Cardiac septum (tissue), 1 donor: ENCODE measurements at regions of chr7 and their contacts with region 1.

Region 1: GRCh38 chr7:25478925-25479324 is 250.6 kb upstream of the NPVF start:
- DNase-seq: no peak

Region 2: DNA sequence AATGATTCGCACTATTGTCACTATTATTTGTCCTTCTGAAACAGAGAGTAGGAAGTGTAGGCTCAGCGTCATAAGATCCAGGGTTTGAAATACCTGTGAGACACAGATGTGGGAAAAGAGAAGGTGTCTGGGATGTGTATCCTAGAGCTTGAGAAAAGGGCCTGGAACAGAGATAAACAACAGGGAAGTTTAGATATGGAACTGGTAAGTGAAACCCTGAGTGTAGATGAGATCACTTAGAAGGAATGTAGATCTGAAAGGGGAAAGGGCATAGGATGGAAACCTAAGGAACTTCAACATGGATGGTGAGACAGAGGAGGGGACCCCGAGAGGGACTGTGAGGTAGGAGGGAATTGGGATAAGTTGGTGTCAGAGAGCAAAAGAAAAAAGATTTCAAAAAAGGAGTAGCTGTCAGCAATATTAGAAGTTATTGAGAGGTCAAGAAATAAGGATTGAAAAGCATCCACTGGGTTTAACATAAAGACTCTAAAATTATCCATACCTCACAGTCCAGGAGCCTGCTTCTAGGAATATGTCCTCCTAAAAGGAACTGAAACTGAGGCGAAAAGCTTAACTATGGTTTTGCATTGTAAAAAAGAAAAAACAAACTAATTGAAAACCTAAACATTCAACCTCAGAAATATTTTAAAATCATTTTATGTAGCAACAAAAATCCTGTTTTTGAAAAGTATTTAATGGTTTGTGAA is 131.4 kb before region 1 on chr7:
- intact Hi-C with region 1: no loop called
- DNase-seq: no peak

Region 3: DNA sequence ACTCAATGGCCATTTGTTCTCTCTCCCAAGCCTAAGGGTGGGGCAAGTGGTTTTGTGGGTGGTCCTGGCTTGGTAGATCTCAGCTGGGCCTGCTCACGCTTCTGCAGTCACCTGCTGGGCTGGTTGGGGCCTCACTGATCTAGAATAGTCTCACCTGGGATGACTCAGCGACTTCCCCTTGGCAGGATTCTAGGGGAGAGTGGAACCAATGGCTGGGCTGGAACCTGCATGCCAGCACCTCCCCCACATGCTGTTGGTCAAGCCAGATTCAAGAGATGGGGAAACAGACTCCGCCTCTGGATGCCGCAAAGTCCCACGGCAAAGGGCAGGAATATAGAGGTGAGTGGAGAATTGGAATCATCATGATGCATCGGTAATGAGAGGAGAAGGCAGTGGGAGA is 42.3 kb after region 1 on chr7:
- intact Hi-C with region 1: no loop called
- DNase-seq: no peak

Region 4: DNA sequence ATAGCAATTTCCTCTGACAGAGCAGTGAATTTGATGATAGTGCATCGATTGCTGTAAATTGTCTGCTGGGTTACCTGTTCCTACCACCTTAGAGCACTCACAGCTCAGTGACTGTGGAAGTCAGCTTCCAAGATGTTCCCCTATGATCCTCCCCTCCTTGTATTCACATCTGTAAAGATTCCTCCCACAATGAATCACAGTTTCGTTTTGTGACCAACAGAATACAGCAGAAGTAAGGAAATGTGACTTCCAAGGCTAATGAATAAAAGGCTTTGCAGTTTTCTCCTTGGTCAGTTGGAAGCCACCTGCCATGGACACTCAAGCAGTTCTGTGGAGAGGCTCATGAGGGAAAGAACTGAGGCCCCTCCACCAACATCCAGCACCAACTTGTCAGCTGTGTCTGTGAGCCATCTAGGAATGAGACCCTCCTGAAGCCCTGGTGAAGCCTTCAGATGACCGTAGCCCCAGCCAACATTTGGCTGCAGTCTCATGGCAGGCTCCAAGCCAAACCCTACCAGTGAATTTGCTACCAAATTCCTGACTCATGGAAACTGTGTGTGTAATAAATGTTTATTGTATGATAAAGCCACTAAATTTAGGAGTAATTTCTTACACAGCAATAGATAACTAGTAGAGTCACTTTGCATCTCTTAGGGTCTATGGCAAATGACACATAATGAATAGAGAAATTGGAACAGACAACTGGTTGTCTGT is 58.9 kb after region 1 on chr7:
- intact Hi-C with region 1: loop called (anchors 10 kb)
- DNase-seq: no peak